ENCODE measurements at regions of chr17 and their contacts with region 1.

Region 1: DNA sequence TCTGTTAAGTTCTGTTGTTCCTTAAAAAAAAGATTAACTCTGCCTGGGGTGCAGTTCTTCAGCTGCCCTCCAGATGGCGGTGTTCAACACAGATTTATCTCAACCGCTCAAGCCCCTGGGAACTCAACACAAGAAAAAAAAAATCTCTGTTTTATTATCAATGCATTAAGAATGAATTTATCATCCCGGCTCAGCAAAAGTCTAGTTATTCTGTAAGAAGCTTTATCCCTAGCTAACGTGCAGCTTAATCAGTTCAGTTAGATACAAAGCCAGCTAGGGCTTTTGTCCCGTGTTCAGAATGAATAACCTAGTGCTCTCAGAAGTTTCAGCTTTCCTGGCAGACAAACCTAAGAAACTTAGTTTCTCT is 475.9 kb upstream of the CCL2 start:
- DNase-seq: peak; percentile 3 to 70
- H3K4me3 ChIP-seq: no peak overlapping the region
- H3K27ac ChIP-seq: no peak overlapping the region
- H3K4me1 ChIP-seq: no peaks in the 10 kb centered on the region
- H3K27me3 ChIP-seq: no peaks in the 10 kb centered on the region
- CTCF ChIP-seq: peak; percentile 55 to 81 (median 76)
- EP300 ChIP-seq: no peak
- POLR2A ChIP-seq: no peak
- RAD21 ChIP-seq: peak; percentile 89 to 90

Region 2: GRCh38 chr17:33769066-33769465 is 10.1 kb before region 1 on chr17:
- CTCF ChIA-PET with region 1: interaction called, 11 read pairs
- POLR2A ChIA-PET with region 1: no interaction called
- DNase-seq: no peak
- H3K4me3 ChIP-seq: no peak overlapping the region
- H3K27ac ChIP-seq: no peak overlapping the region
- H3K4me1 ChIP-seq: peaks cover 0 to 4% (median 0%) of the 10 kb centered on the region in 4 experiments; a peak in 1 of 7 replicates
- H3K27me3 ChIP-seq: no peaks in the 10 kb centered on the region
- CTCF ChIP-seq: no peak
- EP300 ChIP-seq: no peak
- POLR2A ChIP-seq: no peak
- RAD21 ChIP-seq: no peak

Region 3: DNA sequence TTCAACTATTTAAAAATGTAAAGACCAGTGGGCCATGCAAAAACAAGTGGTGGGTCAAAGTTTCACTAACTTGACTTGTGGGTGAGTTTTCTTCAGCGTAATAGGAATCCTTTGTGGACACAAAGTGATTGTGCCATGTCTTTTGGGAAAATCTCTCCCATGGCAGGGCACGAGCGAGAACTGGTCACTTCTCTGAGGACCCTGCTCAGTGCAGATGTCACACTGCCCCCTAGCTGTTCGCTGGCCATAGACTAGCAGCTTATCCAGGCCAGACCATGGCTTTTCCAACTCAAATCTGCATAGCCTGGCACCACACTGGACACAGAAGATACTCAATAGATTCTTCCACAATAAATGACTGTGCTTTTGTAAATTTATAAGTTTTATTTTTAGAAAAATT is 169.9 kb after region 1 on chr17:
- CTCF ChIA-PET with region 1: interaction called, 101 read pairs
- POLR2A ChIA-PET with region 1: no interaction called
- DNase-seq: peak; percentile 25 to 73
- H3K4me3 ChIP-seq: no peak overlapping the region
- H3K27ac ChIP-seq: no peak overlapping the region
- H3K4me1 ChIP-seq: no peaks in the 10 kb centered on the region
- H3K27me3 ChIP-seq: no peaks in the 10 kb centered on the region
- CTCF ChIP-seq: peak; percentile 82 to 92 (median 92)
- EP300 ChIP-seq: no peak
- POLR2A ChIP-seq: no peak
- RAD21 ChIP-seq: peak; percentile 84 to 88

Region 4: DNA sequence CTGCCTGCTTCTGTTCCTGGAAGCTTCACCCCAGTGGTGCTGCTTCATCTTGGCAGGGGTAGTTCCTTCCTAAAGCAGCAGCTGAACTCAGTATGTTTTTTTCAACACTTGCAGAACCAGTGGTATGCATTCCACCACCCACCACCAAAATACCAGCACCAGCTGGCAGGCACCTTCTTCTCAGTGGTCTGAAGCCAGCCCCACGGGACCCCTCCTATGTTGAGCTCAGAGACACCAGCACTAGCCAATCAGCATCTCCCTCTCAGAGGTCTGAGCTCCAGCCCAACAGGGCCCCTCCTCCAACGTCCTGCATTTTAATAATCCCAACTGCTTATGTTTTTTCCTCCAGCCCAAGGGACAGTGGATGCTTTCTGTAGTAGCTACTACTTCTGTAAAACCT is 176.3 kb after region 1 on chr17:
- CTCF ChIA-PET with region 1: interaction called, 16 read pairs
- POLR2A ChIA-PET with region 1: no interaction called
- DNase-seq: no peak
- H3K4me3 ChIP-seq: no peak overlapping the region
- H3K27ac ChIP-seq: no peak overlapping the region
- H3K4me1 ChIP-seq: 0 out of 7 replicates have a peak, but pooled peaks cover 0 to 2% (median 0%) of the 10 kb centered on the region in 4 experiments
- H3K27me3 ChIP-seq: no peaks in the 10 kb centered on the region
- CTCF ChIP-seq: no peak
- EP300 ChIP-seq: no peak
- POLR2A ChIP-seq: no peak
- RAD21 ChIP-seq: no peak

Region 5: GRCh38 chr17:33964344-33964979 is 185.3 kb after region 1 on chr17:
- CTCF ChIA-PET with region 1: interaction called, 16 read pairs
- POLR2A ChIA-PET with region 1: no interaction called
- DNase-seq: no peak
- H3K4me3 ChIP-seq: no peak overlapping the region
- H3K27ac ChIP-seq: no peak overlapping the region
- H3K4me1 ChIP-seq: peaks cover 0 to 4% (median 1%) of the 10 kb centered on the region in 4 experiments; a peak in 2 of 7 replicates
- H3K27me3 ChIP-seq: no peaks in the 10 kb centered on the region
- CTCF ChIP-seq: peak in 2 of 3 experiments; percentile 49 to 61; a peak in 3 of 4 replicates
- EP300 ChIP-seq: no peak
- POLR2A ChIP-seq: no peak
- RAD21 ChIP-seq: peak; percentile 42 to 54; a peak in 3 of 4 replicates

Region 6: DNA sequence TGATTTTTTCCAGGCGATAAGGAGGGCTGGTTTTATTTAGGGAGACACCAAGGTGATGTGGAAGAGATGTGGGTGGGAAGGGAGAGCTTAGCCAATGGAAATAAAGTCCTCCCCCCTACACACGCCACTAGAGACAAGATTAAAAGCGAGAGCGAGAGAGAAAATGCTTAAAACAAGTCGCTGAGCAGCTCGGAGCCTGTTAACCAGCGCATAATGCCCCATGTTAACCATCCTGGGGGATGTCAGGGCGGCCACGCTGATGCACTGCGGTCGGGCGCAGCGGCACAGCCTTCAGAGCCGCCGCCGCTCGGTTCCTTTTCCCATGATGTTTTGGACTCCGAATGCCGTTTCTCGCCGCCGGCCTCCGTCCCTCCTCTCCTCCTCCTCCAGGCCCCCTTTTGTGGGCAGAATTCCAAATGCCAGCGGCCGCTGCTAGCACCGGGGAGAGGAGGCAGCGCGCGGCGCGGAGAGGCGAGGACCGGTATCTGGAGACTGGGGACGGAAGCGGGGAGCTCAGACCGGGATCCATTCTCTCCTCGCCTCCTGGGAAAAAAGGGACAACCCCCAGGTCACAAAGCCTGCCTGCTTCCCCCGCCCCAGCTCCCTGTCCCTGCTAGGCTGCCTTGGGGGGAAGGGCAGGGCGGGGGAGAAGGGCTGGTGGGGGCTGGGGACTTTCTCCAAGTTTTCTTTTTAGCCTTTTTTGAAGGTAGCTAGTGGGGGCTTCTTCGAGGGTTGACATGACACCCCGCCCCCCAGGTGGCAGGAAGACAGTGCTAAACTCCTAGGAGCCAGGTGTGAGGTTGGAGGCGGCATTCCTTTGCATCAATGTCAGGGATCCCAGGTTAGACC is 377.8 kb after region 1 on chr17:
- CTCF ChIA-PET with region 1: interaction called, 28 read pairs
- POLR2A ChIA-PET with region 1: interaction called, 5 read pairs
- DNase-seq: peak in 1 of 2 experiments; percentile 79
- H3K4me3 ChIP-seq: peak overlapping the region; percentile 41 to 66 (median 52)
- H3K27ac ChIP-seq: peak overlapping the region; percentile 82
- H3K4me1 ChIP-seq: peaks cover 19 to 40% (median 27%) of the 10 kb centered on the region in 4 experiments
- H3K27me3 ChIP-seq: peaks cover 0 to 15% (median 12%) of the 10 kb centered on the region in 4 experiments; a peak in 3 of 7 replicates
- CTCF ChIP-seq: no peak
- EP300 ChIP-seq: no peak
- POLR2A ChIP-seq: peak in 1 of 2 experiments; percentile 81; a peak in 2 of 3 replicates
- RAD21 ChIP-seq: no peak

Region 7: DNA sequence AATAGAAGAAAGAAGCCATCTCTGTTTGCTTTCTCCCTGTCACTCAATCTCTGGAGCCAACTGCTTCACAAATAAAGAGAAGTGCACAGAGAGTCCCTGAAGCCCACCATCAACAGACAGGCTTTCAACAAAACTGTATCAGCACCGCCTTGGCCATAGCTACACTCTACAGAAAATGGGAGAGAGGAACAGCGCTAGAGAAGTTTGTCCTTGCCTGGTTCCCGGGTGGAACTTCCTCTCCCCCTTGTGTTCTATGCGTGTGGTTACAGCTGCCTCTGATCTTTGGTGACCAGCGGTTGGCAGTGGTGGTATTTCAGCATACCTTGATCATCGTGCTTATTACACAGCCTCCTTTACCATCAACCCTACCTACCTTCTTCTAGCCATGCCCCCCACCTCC is 384.4 kb after region 1 on chr17:
- CTCF ChIA-PET with region 1: interaction called, 10 read pairs
- POLR2A ChIA-PET with region 1: no interaction called
- DNase-seq: peak in 1 of 2 experiments; percentile 52
- H3K4me3 ChIP-seq: no peak overlapping the region
- H3K27ac ChIP-seq: no peak overlapping the region
- H3K4me1 ChIP-seq: peaks cover 0 to 3% (median 0%) of the 10 kb centered on the region in 4 experiments; a peak in 1 of 7 replicates
- H3K27me3 ChIP-seq: no peaks in the 10 kb centered on the region
- CTCF ChIP-seq: peak; percentile 81 to 85 (median 83)
- EP300 ChIP-seq: no peak
- POLR2A ChIP-seq: no peak
- RAD21 ChIP-seq: peak; percentile 94

Measured in H1 (cell line).